K562 (cell line): ENCODE measurements at regions of chr11 and their contacts with region 1.

Region 1: DNA sequence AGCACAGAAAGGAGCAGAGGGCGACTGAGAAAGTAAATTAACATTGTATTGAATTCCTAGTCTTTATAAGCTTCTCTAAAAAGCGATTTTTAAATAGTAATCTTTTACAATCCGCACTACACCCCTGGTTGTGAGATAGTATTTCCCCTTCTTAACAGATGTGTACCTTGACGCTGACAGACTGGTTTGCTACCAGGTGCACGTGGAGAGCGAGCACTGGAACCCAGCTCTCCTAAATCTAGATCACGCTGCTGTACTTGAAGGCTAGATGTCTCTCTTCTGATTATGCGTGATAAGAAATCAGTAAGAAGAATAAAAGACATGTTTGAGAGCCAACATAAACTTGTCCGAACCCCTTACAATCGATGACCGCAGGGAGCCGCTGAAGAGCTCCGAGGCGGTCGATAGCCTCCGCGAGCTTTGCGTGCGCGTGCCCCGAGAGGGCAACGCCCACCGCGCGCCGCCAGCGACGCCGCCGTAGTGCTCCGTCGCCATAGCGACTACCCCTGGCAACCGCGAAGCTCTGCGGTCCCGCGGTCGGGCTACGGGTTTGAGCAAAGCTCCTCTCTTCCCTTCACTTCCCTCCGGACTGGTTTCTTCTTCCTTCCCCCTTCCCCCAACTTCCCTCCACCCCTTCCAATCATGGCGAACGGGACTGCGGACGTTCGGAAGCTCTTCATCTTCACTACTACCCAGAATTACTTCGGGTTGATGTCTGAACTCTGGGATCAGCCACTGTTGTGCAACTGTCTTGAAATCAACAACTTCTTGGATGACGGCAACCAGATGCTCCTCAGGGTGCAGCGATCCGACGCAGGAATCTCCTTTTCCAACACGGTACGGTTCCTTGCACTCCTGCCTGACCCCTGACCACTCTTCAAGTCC is at the start of gene DYNC2H1:
- DNase-seq: peak; percentile 87 to 89 (median 88)
- ATAC-seq: peak; percentile 99
- H3K4me3 ChIP-seq: peak within 1 kb of the TSS; percentile 48
- H3K27ac ChIP-seq: peak within 1 kb of the TSS; percentile 64; the same call in 2 of the 3 replicates
- H3K4me1 ChIP-seq: peaks cover 4 to 6% of the 10 kb centered on the region in 2 experiments; a peak in 4 of 5 replicates
- H3K27me3 ChIP-seq: no peaks in the 10 kb centered on the region
- CTCF ChIP-seq: peak; percentile 47 to 63 (median 55)
- EP300 ChIP-seq: no peak
- POLR2A ChIP-seq: no peak
- RAD21 ChIP-seq: peak; percentile 15 to 26; a peak in 1 of 4 replicates
- polyA plus RNA-seq, gene DYNC2H1: 0.10 to 0.17 TPM

Region 2: DNA sequence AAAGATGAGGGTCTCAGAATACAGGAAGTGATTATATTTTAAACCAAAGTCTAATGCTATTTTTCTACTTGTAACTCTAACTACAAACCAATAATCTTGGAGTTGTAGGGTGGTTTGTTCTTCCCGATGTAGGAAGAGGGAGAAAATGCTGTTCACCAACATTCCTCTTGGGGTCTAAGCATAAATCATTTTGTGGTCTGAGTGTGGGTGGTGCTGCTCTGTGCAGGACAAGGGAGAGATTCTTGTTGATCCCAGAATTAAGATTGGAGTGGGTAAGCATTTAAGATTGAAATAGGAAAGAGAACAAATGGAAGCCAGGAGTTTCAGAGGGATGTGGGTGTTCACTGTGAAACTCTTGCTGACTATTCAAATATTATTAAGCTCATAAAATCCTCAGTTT is 115.1 kb before region 1 on chr11:
- CTCF ChIA-PET with region 1: no interaction called
- POLR2A ChIA-PET with region 1: no interaction called
- in situ Hi-C with region 1: no loop called
- intact Hi-C with region 1: no loop called
- DNase-seq: no peak
- ATAC-seq: no peak
- H3K4me3 ChIP-seq: no peak overlapping the region
- H3K27ac ChIP-seq: no peak overlapping the region
- H3K4me1 ChIP-seq: no peaks in the 10 kb centered on the region
- H3K27me3 ChIP-seq: no peaks in the 10 kb centered on the region
- CTCF ChIP-seq: no peak
- EP300 ChIP-seq: no peak
- POLR2A ChIP-seq: no peak
- RAD21 ChIP-seq: no peak

Region 3: DNA sequence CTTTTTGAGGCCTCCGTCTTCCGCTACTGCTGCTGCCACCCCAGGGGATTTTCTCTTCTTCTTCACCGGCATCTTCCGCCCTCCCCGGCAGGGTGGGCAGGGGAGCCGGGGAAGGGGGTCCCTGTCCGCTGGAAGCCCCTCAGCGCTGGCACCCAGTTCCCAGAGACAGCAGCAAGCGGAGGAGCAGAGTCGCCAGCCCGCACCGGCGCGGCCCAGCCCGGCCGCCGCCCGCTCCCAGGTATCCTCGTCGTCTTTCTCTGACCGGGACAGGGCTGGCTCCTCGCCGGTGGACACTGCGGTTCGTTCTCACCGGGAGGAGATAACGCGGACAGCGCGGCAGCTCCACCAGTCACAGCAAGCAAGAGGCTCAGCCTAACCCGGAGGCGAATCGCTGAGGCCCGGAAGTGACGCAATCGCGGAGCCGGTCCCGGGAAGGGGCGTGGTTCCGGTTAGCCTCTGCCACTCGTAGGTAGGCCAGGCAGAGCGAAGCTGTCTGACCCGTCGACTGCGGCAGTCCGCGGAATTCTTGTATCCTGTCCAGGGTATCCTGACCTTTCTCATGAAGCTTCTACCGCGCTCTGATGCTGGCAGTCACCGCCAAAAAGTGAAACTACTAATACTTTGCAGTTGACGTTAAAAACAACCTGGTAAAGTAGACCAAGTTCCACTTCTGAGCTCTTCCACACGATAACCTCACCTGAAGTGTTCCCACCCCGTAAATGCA is 17.2 kb before region 1 on chr11 and contains the start of gene DCUN1D5:
- CTCF ChIA-PET with region 1: no interaction called
- POLR2A ChIA-PET with region 1: interaction called, 5 read pairs
- in situ Hi-C with region 1: no loop called
- intact Hi-C with region 1: loop called (anchors 1 kb)
- DNase-seq: peak; percentile 90 to 97 (median 94)
- ATAC-seq: peak; percentile 91
- H3K4me3 ChIP-seq: peak within 1 kb of the TSS; percentile 95
- H3K27ac ChIP-seq: peak within 1 kb of the TSS; percentile 91
- H3K4me1 ChIP-seq: no peaks in the 10 kb centered on the region
- H3K27me3 ChIP-seq: peaks cover 0 to 3% of the 10 kb centered on the region in 2 experiments; a peak in 2 of 5 replicates
- CTCF ChIP-seq: no peak
- EP300 ChIP-seq: peak; percentile 32
- POLR2A ChIP-seq: peak; percentile 94
- RAD21 ChIP-seq: no peak
- polyA plus RNA-seq, gene DCUN1D5: 38.4 to 39.1 TPM

Region 4: DNA sequence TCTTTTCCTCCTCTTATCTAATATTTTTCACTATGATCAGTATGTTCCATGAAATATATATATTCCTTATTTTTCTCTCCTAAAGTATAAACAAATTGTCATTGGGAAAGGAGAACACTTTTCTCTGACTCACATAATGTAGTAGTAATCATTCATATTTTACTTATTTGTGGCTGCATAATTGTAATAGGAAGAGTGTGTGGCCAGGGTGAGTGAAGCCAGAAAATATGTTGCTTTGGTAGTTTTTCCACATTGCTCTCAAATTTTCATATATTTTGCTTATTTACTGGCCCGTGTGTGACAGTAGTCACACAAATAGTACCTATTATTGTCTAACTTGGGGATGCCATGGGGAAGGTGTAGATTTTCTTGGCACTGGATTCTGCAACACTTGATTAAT is 172.1 kb after region 1 on chr11:
- CTCF ChIA-PET with region 1: no interaction called
- POLR2A ChIA-PET with region 1: no interaction called
- in situ Hi-C with region 1: no loop called
- intact Hi-C with region 1: no loop called
- DNase-seq: no peak
- ATAC-seq: no peak
- H3K4me3 ChIP-seq: no peak overlapping the region
- H3K27ac ChIP-seq: no peak overlapping the region
- H3K4me1 ChIP-seq: no peaks in the 10 kb centered on the region
- H3K27me3 ChIP-seq: no peaks in the 10 kb centered on the region
- CTCF ChIP-seq: no peak
- EP300 ChIP-seq: no peak
- POLR2A ChIP-seq: no peak
- RAD21 ChIP-seq: no peak

Region 5: GRCh38 chr11:103295704-103296103 is 186.5 kb after region 1 on chr11:
- CTCF ChIA-PET with region 1: no interaction called
- POLR2A ChIA-PET with region 1: no interaction called
- in situ Hi-C with region 1: no loop called
- intact Hi-C with region 1: no loop called
- DNase-seq: peak in 1 of 4 experiments; percentile 3
- ATAC-seq: no peak
- H3K4me3 ChIP-seq: no peak overlapping the region
- H3K27ac ChIP-seq: no peak overlapping the region
- H3K4me1 ChIP-seq: no peaks in the 10 kb centered on the region
- H3K27me3 ChIP-seq: no peaks in the 10 kb centered on the region
- CTCF ChIP-seq: no peak
- EP300 ChIP-seq: no peak
- POLR2A ChIP-seq: no peak
- RAD21 ChIP-seq: no peak